ENCODE measurements at regions of chr11 and their contacts with region 1.

Region 1: DNA sequence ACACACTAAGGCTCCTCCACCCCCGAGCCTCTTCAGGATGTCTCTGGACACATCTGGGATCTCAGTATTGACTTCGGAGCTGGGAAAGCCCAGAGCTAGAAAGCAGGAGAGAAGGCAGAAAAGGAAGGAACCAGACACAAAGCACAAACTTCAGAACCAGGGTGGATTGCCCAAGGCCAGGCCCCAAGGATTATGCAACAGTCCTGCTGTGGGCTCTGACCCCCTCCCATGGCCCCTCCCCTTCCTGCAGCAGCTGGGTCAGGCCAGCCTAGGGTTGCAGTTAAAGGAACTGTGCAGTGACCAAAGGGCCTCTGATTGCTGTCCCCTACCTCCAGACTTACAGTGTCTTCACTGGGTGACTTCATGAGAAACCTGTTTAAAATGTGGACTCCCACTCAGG is 5.3 kb downstream of the KCNE3 start:
- DNase-seq: peak; percentile 90 to 95 (median 94)
- H3K4me3 ChIP-seq: peak overlapping the region; percentile 81 to 99 (median 97)
- H3K4me3 Mint-ChIP-seq: no peak overlapping the region
- H3K27ac ChIP-seq: peak overlapping the region; percentile 78 to 93
- H3K27ac Mint-ChIP-seq: no peak overlapping the region
- H3K4me1 ChIP-seq: peaks cover 86 to 89% of the 10 kb centered on the region in 2 donors
- H3K4me1 Mint-ChIP-seq: peaks cover 70% of the 10 kb centered on the region
- H3K27me3 ChIP-seq: no peaks in the 10 kb centered on the region
- H3K27me3 Mint-ChIP-seq: peaks cover 0 to 6% (median 0%) of the 10 kb centered on the region in 3 donors
- CTCF ChIP-seq: no peak

Region 2: GRCh38 chr11:74398244-74399159 is 63.5 kb before region 1 on chr11 and contains the start of gene PGM2L1:
- intact Hi-C with region 1: loop called in 1 of 2 experiments (anchors 5 kb)
- DNase-seq: peak; percentile 82 to 88 (median 86)
- H3K4me3 ChIP-seq: peak within 1 kb of the TSS; percentile 59 to 94 (median 89)
- H3K4me3 Mint-ChIP-seq: peak within 1 kb of the TSS; percentile 100
- H3K27ac ChIP-seq: peak within 1 kb of the TSS; percentile 66 to 79
- H3K27ac Mint-ChIP-seq: peak within 1 kb of the TSS; percentile 94 to 100 (median 99)
- H3K4me1 ChIP-seq: peaks cover 10 to 13% of the 10 kb centered on the region in 2 donors
- H3K4me1 Mint-ChIP-seq: peaks cover 12% of the 10 kb centered on the region
- H3K27me3 ChIP-seq: no peaks in the 10 kb centered on the region
- H3K27me3 Mint-ChIP-seq: peaks cover 0 to 2% (median 0%) of the 10 kb centered on the region in 3 donors
- CTCF ChIP-seq: no peak
- polyA plus RNA-seq, gene PGM2L1: 0.25 to 0.81 (median 0.62) TPM

Region 3: GRCh38 chr11:74492974-74493790 is 31.2 kb after region 1 on chr11 and contains the start of gene LIPT2:
- intact Hi-C with region 1: loop called in 1 of 2 experiments (anchors 5 kb)
- DNase-seq: peak; percentile 91 to 94 (median 92)
- H3K4me3 ChIP-seq: peak within 1 kb of the TSS; percentile 47 to 91 (median 86)
- H3K4me3 Mint-ChIP-seq: peak within 1 kb of the TSS; percentile 71 to 80
- H3K27ac ChIP-seq: peak within 1 kb of the TSS; percentile 27 to 88
- H3K27ac Mint-ChIP-seq: peak within 1 kb of the TSS; percentile 76 to 93 (median 92)
- H3K4me1 ChIP-seq: peaks cover 16 to 25% of the 10 kb centered on the region in 2 donors
- H3K4me1 Mint-ChIP-seq: peaks cover 20% of the 10 kb centered on the region
- H3K27me3 ChIP-seq: no peaks in the 10 kb centered on the region
- H3K27me3 Mint-ChIP-seq: no peaks in the 10 kb centered on the region
- CTCF ChIP-seq: no peak
- polyA plus RNA-seq, gene LIPT2: 2.2 to 5.1 (median 4.4) TPM

Measured in CD14-positive monocyte (primary cell).